Mammary epithelial cell (primary cell): ENCODE measurements at regions of chr17 and their contacts with region 1.

Region 1: GRCh38 chr17:68759343-68760132 is 158.4 kb upstream of the FAM20A start:
- DNase-seq: peak; percentile 82
- H3K4me3 ChIP-seq: peak overlapping the region; percentile 47 to 62 (median 62)
- H3K27ac ChIP-seq: peak overlapping the region; percentile 83
- H3K4me1 ChIP-seq: peaks cover 8% of the 10 kb centered on the region
- H3K27me3 ChIP-seq: no peaks in the 10 kb centered on the region
- CTCF ChIP-seq: peak; percentile 98 to 99

Region 2: GRCh38 chr17:68172461-68172954 is 587.0 kb before region 1 on chr17:
- CTCF ChIA-PET with region 1: no interaction called
- dilution Hi-C with region 1: no loop called
- in situ Hi-C with region 1: no loop called
- intact Hi-C with region 1: loop called (anchors 1 kb)
- DNase-seq: peak; percentile 35
- H3K4me3 ChIP-seq: no peak overlapping the region
- H3K27ac ChIP-seq: no peak overlapping the region
- H3K4me1 ChIP-seq: no peaks in the 10 kb centered on the region
- H3K27me3 ChIP-seq: no peaks in the 10 kb centered on the region
- CTCF ChIP-seq: peak; percentile 94 to 96

Region 3: GRCh38 chr17:68255731-68256538 is 503.6 kb before region 1 on chr17:
- CTCF ChIA-PET with region 1: no interaction called
- dilution Hi-C with region 1: no loop called
- in situ Hi-C with region 1: loop called in 1 of 2 experiments (anchors 25 kb)
- intact Hi-C with region 1: no loop called
- DNase-seq: no peak
- H3K4me3 ChIP-seq: no peak overlapping the region
- H3K27ac ChIP-seq: no peak overlapping the region
- H3K4me1 ChIP-seq: no peaks in the 10 kb centered on the region
- H3K27me3 ChIP-seq: no peaks in the 10 kb centered on the region
- CTCF ChIP-seq: no peak

Region 4: GRCh38 chr17:68533887-68534694 is 225.4 kb before region 1 on chr17:
- CTCF ChIA-PET with region 1: no interaction called
- dilution Hi-C with region 1: no loop called
- in situ Hi-C with region 1: loop called in 1 of 2 experiments (anchors 5 kb)
- intact Hi-C with region 1: loop called (anchors 1 kb)
- DNase-seq: no peak
- H3K4me3 ChIP-seq: no peak overlapping the region
- H3K27ac ChIP-seq: no peak overlapping the region
- H3K4me1 ChIP-seq: no peaks in the 10 kb centered on the region
- H3K27me3 ChIP-seq: no peaks in the 10 kb centered on the region
- CTCF ChIP-seq: peak; percentile 36 to 50

Region 5: GRCh38 chr17:68539548-68540467 is 219.7 kb before region 1 on chr17:
- CTCF ChIA-PET with region 1: no interaction called
- dilution Hi-C with region 1: no loop called
- in situ Hi-C with region 1: no loop called
- intact Hi-C with region 1: loop called (anchors 1 kb)
- DNase-seq: peak; percentile 19
- H3K4me3 ChIP-seq: no peak overlapping the region
- H3K27ac ChIP-seq: no peak overlapping the region
- H3K4me1 ChIP-seq: no peaks in the 10 kb centered on the region
- H3K27me3 ChIP-seq: no peaks in the 10 kb centered on the region
- CTCF ChIP-seq: peak; percentile 9 to 63

Region 6: GRCh38 chr17:68613739-68614298 is 145.7 kb before region 1 on chr17:
- CTCF ChIA-PET with region 1: no interaction called
- dilution Hi-C with region 1: no loop called
- in situ Hi-C with region 1: no loop called
- intact Hi-C with region 1: loop called (anchors 2 kb)
- DNase-seq: peak; percentile 25
- H3K4me3 ChIP-seq: no peak overlapping the region
- H3K27ac ChIP-seq: no peak overlapping the region
- H3K4me1 ChIP-seq: no peaks in the 10 kb centered on the region
- H3K27me3 ChIP-seq: no peaks in the 10 kb centered on the region
- CTCF ChIP-seq: peak; percentile 73 to 86